ENCODE measurements at regions of chr5 and their contacts with region 1.

Region 1: DNA sequence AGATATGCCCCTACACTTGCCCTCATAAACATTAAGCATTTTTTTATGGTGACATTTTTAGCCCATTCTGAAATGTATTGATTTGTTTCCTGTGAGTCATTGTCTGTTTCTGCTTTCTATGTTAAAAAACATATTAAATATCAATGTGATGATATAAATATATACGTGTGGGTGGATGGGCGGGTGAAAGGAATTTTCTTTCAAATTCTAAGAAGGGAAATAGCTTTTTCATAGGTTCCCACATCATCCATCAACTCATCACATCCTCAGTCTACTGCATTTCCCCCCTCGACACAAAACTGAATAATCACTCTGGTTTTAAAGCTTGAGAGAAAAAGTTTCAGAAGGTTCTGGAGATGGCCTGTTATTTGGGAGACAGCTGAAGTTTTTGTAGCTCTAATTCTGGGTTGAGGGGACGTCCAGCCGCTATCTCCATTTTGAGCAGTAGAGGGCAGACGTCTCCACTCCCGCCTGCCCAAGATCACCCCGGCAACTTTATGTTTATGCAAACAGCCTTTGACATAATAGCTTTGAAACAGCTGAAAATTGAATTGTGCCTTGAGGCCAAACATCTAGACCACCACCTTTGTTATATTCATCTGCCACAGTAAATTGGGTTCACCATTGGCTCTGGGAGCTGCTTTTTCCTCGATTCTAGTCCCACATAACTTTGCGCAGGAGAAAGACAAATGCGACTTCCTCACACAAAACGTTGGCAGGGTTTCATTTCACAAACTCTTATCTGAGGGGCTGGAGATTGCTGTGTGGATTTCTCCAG is 216.2 kb upstream of the CLINT1 start:
- H3K4me3 Mint-ChIP-seq: peak overlapping the region; percentile 52
- H3K27ac Mint-ChIP-seq: no peak overlapping the region
- H3K4me1 Mint-ChIP-seq: peaks cover 5% of the 10 kb centered on the region
- H3K27me3 Mint-ChIP-seq: peaks cover 8% of the 10 kb centered on the region

Region 2: DNA sequence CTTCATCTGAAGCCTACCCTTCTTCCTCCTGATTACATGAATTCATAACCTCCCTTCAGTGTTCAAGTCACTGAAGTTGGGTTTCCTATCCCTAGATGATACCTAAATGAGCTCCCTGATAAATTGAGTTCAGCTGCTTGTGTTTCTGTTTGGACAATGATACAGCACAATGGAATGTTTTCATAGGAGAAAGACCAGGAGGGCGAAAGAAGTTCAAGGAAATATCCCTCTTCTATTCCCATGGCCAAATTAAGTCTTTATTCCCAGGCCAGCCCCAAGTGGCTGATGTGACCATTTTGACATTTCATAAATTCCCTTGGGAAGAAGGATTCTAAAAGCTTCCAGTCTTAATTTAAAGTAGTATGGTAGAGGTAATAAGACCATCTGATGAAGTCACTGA is 339.6 kb after region 1 on chr5:
- intact Hi-C with region 1: no loop called
- H3K4me3 Mint-ChIP-seq: no peak overlapping the region
- H3K27ac Mint-ChIP-seq: no peak overlapping the region
- H3K4me1 Mint-ChIP-seq: peaks cover 25% of the 10 kb centered on the region
- H3K27me3 Mint-ChIP-seq: peaks cover 3% of the 10 kb centered on the region

Region 3: GRCh38 chr5:158695595-158696330 is 620.6 kb after region 1 on chr5:
- intact Hi-C with region 1: loop called (anchors 10 kb)
- H3K4me3 Mint-ChIP-seq: no peak overlapping the region
- H3K27ac Mint-ChIP-seq: no peak overlapping the region
- H3K4me1 Mint-ChIP-seq: no peaks in the 10 kb centered on the region
- H3K27me3 Mint-ChIP-seq: peaks cover 13% of the 10 kb centered on the region

Region 4: GRCh38 chr5:159106569-159107282 is 1031.5 kb after region 1 on chr5:
- intact Hi-C with region 1: loop called (anchors 1 kb)
- H3K4me3 Mint-ChIP-seq: peak overlapping the region; percentile 71
- H3K27ac Mint-ChIP-seq: no peak overlapping the region
- H3K4me1 Mint-ChIP-seq: peaks cover 26% of the 10 kb centered on the region
- H3K27me3 Mint-ChIP-seq: peaks cover 76% of the 10 kb centered on the region

Region 5: GRCh38 chr5:159133041-159133741 is 1058.0 kb after region 1 on chr5:
- intact Hi-C with region 1: loop called (anchors 5 kb)
- H3K4me3 Mint-ChIP-seq: no peak overlapping the region
- H3K27ac Mint-ChIP-seq: no peak overlapping the region
- H3K4me1 Mint-ChIP-seq: no peaks in the 10 kb centered on the region
- H3K27me3 Mint-ChIP-seq: peaks cover 5% of the 10 kb centered on the region

Measured in dendritic cell treated with granulocyte-macrophage colony-stimulating factor and Interleukin-4, amounts not matched to agents 40 ng/mL and 50 ng/mL, for 4 days (primary cell).